GM10248 (cell line): ENCODE measurements at regions of chr2 and their contacts with region 1.

Region 1: DNA sequence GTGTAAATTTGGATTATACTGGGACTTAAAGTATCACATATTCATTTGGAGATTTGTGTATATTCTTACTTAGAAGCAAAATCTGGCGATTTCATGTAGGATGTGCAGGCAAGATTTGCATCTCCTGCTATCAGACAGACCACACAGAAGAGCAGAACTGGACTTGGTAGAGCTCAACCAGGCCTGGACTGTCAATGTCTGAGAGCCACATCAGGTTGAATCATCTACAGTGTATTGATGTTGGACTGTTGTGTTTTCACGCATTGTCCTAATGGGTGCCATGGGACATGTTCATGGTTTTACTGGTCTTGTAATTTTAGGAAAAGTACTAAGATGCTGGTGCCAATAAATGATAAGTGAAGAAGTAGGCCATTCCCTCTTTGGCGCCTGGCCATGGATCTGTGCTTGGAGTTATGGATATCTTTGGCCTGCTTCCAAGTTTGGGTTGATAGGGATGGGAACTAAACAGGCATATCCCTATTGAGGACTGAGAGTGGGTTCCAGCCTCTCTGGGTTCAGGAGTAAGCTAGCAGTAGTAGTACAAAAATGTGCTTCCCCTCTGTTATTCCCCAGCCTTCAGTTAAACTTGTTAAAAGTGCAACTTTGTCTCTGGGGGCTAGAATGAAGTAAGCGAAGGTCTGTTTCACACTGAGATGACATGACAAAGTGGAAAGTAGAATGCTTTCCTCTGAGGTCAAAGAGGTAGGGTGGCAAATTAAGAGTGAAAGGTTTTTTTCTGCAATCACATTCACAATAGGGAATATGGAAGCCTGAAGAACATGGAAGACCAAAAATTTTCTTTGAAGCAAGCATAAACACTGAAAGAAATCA is 49.2 kb upstream of the NEMP2 start:
- DNase-seq: no peak
- CTCF ChIP-seq: no peak

Region 2: GRCh38 chr2:190571686-190572085 is 12.0 kb before region 1 on chr2:
- CTCF ChIA-PET with region 1: interaction called, 10 read pairs
- POLR2A ChIA-PET with region 1: no interaction called
- DNase-seq: no peak
- CTCF ChIP-seq: no peak

Region 3: GRCh38 chr2:190618030-190618429 is 34.3 kb after region 1 on chr2:
- CTCF ChIA-PET with region 1: no interaction called
- POLR2A ChIA-PET with region 1: no interaction called
- DNase-seq: no peak
- CTCF ChIP-seq: no peak